Transverse colon (tissue), 4 donors: ENCODE measurements at regions of chr19 and their contacts with region 1.

Region 1: GRCh38 chr19:30682999-30683536 is 310.9 kb downstream of the ZNF536 start:
- DNase-seq: peak; percentile 66
- H3K4me3 ChIP-seq: no peak overlapping the region
- H3K27ac ChIP-seq: no peak overlapping the region
- H3K4me1 ChIP-seq: peaks cover 0 to 2% (median 0%) of the 10 kb centered on the region in 4 donors
- H3K27me3 ChIP-seq: peaks cover 9% of the 10 kb centered on the region
- CTCF ChIP-seq: peak; percentile 74 to 88 (median 83)
- EP300 ChIP-seq: no peak
- POLR2A ChIP-seq: no peak

Region 2: GRCh38 chr19:29988351-29988750 is 694.7 kb before region 1 on chr19:
- in situ Hi-C with region 1: no loop called
- intact Hi-C with region 1: no loop called
- DNase-seq: no peak
- H3K4me3 ChIP-seq: no peak overlapping the region
- H3K27ac ChIP-seq: no peak overlapping the region
- H3K4me1 ChIP-seq: no peaks in the 10 kb centered on the region
- H3K27me3 ChIP-seq: no peaks in the 10 kb centered on the region
- CTCF ChIP-seq: no peak
- EP300 ChIP-seq: no peak
- POLR2A ChIP-seq: no peak

Region 3: GRCh38 chr19:31349160-31349881 is 666.3 kb after region 1 on chr19 and contains the start of gene TSHZ3:
- in situ Hi-C with region 1: loop called in 1 of 4 experiments (anchors 25 kb)
- intact Hi-C with region 1: no loop called
- DNase-seq: peak; percentile 72
- H3K4me3 ChIP-seq: peak within 1 kb of the TSS; percentile 71 to 97 (median 90)
- H3K27ac ChIP-seq: peak within 1 kb of the TSS; percentile 93 to 97 (median 96)
- H3K4me1 ChIP-seq: peaks cover 0 to 47% (median 18%) of the 10 kb centered on the region in 4 donors
- H3K27me3 ChIP-seq: peaks cover 87% of the 10 kb centered on the region
- CTCF ChIP-seq: no peak
- EP300 ChIP-seq: no peak
- POLR2A ChIP-seq: no peak
- total RNA-seq, gene TSHZ3: 3.0 to 6.4 (median 4.6) TPM

Region 4: DNA sequence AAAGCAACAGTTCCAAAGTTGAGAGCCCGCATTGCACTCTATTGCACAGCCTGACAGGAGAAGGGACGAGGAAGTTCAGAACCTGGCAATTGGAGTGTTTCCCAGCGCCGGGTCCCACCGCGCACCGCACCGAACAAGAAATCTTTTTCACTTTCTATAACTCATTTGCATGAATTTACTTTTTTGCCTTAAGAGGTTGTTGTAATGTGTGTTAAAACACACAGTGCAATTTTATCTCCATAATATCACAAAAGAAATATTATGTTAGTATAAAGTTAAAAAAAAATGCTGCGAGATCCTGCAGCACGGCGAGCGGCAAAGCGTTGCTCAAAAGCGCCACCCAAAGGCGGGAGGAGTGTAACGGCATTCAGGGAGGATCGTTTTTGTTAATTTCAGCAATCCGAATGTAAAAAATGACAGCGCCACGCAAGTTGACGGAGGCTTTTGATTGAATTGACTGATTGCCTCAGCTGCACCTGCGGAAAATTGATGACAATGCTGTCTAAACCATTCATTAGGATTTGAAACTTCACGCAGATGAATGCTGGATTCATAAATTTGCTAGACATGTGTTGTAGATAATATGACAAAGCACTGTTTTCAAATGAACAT is 1358.7 kb after region 1 on chr19:
- in situ Hi-C with region 1: loop called in 1 of 4 experiments (anchors 25 kb)
- intact Hi-C with region 1: loop called (anchors 10 kb)
- DNase-seq: peak; percentile 40
- H3K4me3 ChIP-seq: peak overlapping the region in 2 of 4 donors; percentile 11 to 35
- H3K27ac ChIP-seq: no peak overlapping the region
- H3K4me1 ChIP-seq: peaks cover 0 to 5% (median 0%) of the 10 kb centered on the region in 4 donors
- H3K27me3 ChIP-seq: peaks cover 25% of the 10 kb centered on the region
- CTCF ChIP-seq: peak; percentile 69 to 78 (median 74)
- EP300 ChIP-seq: no peak
- POLR2A ChIP-seq: no peak

Region 5: GRCh38 chr19:32224371-32225244 is 1541.5 kb after region 1 on chr19:
- in situ Hi-C with region 1: loop called in 1 of 4 experiments (anchors 10 kb)
- intact Hi-C with region 1: loop called (anchors 10 kb)
- DNase-seq: peak; percentile 56
- H3K4me3 ChIP-seq: peak overlapping the region in 1 of 4 donors; percentile 32
- H3K27ac ChIP-seq: no peak overlapping the region
- H3K4me1 ChIP-seq: peaks cover 0 to 6% (median 1%) of the 10 kb centered on the region in 4 donors
- H3K27me3 ChIP-seq: peaks cover 32% of the 10 kb centered on the region
- CTCF ChIP-seq: peak; percentile 91 to 100 (median 100)
- EP300 ChIP-seq: no peak
- POLR2A ChIP-seq: no peak